AG04449 (cell line): ENCODE measurements at regions of chr15 and their contacts with region 1.

Region 1: DNA sequence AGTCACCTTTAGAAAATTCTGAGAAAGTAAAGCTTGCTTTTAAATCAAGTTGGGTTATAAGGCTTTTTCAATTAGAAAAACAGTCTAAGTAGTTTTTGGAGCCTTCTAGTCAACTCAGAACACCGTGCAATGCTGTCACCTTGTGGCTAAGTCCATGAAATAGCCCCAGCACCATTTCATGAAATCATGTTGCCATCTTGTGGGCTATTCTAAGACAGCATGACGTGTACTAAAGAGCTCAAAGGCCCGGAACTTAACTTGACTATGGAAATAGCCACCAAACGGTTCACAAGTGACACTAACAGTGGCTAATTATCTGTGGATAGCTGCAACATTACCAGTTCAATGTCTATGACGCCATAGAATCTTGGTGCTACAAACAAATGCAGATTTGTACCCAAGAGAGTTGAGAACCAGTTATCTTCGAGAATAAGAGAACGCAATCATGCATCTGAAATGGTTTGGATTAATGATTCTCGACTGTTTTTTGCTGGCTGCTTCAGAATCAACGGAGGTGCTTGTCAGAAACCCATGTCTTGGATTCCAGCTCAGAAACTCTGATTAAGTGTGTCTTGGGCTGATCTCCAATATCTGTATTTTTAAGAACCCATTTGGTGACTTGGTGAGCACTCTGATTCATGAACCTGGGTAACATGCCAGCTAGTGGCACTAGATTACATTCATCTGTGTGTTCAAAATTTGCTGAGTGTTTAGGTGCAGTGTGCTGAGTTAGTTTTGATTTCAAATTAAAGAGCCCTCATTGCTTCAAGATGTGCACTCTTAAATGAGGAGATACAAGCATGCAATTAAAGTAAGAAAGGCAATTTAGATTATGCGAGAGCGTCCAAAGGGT is 111.2 kb upstream of the MCTP2 start:
- DNase-seq: peak; percentile 73
- H3K4me3 ChIP-seq: no peak overlapping the region
- CTCF ChIP-seq: peak; percentile 94

Region 2: GRCh38 chr15:93035953-93036800 is 1084.0 kb before region 1 on chr15:
- CTCF ChIA-PET with region 1: interaction called, 184 read pairs
- POLR2A ChIA-PET with region 1: no interaction called
- DNase-seq: no peak
- H3K4me3 ChIP-seq: no peak overlapping the region
- CTCF ChIP-seq: peak; percentile 61

Region 3: DNA sequence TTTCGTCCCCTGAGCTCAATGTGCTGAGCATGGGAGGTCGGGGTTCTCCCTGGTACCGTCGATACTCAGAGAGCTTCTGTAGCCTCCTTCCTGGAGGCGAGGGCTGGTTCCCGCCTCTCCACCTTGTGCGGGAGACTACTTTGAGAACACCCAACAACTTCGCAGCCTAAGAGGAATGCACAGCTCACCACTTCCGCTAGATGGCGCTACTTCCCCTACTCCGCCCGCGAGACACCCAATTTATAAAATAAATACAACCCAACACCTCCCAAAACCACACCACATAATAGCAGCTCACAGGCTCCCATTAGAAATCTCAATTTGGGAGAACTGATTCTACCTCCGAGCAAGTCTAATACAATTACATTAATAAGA is 1032.3 kb before region 1 on chr15:
- CTCF ChIA-PET with region 1: interaction called, 64 read pairs
- POLR2A ChIA-PET with region 1: no interaction called
- DNase-seq: no peak
- H3K4me3 ChIP-seq: no peak overlapping the region
- CTCF ChIP-seq: peak; percentile 76

Region 4: GRCh38 chr15:93987111-93987467 is 133.1 kb before region 1 on chr15:
- CTCF ChIA-PET with region 1: interaction called, 44 read pairs
- POLR2A ChIA-PET with region 1: no interaction called
- DNase-seq: no peak
- H3K4me3 ChIP-seq: no peak overlapping the region
- CTCF ChIP-seq: no peak

Region 5: GRCh38 chr15:94015324-94015723 is 104.8 kb before region 1 on chr15:
- CTCF ChIA-PET with region 1: interaction called, 16 read pairs
- POLR2A ChIA-PET with region 1: no interaction called
- DNase-seq: no peak
- H3K4me3 ChIP-seq: no peak overlapping the region
- CTCF ChIP-seq: no peak

Region 6: GRCh38 chr15:94080418-94080817 is 39.7 kb before region 1 on chr15:
- CTCF ChIA-PET with region 1: interaction called, 17 read pairs
- POLR2A ChIA-PET with region 1: no interaction called
- DNase-seq: no peak
- H3K4me3 ChIP-seq: no peak overlapping the region
- CTCF ChIP-seq: no peak

Region 7: DNA sequence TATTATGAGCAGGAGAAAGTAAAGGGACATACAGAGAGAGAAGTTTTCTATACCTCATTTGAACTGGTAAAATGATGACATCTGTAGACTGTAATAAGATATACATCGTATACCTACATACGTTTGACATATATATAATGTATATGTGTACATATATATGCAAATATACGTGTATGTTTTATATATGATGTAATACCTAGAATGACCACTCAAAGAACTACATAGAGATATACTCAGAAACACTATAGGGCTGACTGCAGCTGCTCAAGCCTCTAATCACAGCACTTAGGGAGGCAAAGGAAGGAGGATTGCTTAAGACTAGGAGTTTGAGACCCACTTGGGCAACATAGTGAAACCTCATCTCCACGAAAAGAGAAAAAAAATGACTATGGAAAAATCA is 62.7 kb after region 1 on chr15:
- CTCF ChIA-PET with region 1: no interaction called
- POLR2A ChIA-PET with region 1: no interaction called
- DNase-seq: no peak
- H3K4me3 ChIP-seq: no peak overlapping the region
- CTCF ChIP-seq: no peak

Region 8: GRCh38 chr15:94287794-94288246 is 167.7 kb after region 1 on chr15:
- CTCF ChIA-PET with region 1: no interaction called
- POLR2A ChIA-PET with region 1: no interaction called
- DNase-seq: no peak
- H3K4me3 ChIP-seq: no peak overlapping the region
- CTCF ChIP-seq: no peak